ENCODE measurements at regions of chr1 and their contacts with region 1.

Region 1: DNA sequence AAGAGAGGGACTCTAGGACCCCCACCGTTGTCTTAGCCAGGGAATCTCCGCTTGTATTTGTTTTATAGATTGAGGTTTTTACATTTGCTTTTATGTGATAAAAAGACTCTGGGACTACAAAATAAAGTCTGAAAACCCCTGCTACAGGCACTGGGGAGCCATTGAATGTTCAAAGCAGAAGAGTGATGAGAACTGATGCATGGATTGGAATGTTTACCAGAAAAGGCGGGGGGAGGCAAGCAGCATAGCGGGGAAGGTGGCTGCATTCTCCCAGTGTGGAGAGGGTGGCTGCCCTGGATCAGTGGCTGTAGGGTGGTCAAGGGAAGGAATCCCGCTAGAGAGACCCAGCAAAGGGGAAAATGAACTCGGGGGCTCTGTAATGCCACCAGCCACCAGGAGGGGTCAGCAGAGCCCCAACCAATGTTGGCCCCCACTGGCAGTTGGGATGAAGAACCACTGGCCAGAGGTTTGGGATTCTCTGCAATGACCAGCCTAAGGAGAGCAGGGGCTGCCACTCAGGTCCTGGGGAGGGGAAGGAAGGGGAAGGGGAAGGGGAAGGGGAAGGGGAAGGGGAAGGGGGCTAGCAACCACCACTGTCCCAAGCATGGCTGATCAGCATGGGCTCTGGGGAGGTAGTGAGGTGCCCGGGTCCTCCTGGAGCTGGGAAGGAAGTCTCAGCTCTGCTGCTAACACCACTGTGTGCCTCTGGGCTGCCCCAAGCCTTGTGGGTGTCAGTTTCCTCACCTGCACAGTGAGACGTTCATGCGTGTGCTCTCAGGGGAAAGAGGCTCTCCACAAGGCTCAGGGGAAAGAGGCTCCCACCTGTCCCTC is 19.2 kb upstream of the PEF1 start:
- DNase-seq: peak; percentile 78
- H3K4me3 Mint-ChIP-seq: no peak overlapping the region
- H3K27ac Mint-ChIP-seq: no peak overlapping the region
- H3K4me1 Mint-ChIP-seq: peaks cover 13% of the 10 kb centered on the region
- H3K27me3 Mint-ChIP-seq: peaks cover 42% of the 10 kb centered on the region
- CTCF ChIP-seq: peak; percentile 96

Region 2: DNA sequence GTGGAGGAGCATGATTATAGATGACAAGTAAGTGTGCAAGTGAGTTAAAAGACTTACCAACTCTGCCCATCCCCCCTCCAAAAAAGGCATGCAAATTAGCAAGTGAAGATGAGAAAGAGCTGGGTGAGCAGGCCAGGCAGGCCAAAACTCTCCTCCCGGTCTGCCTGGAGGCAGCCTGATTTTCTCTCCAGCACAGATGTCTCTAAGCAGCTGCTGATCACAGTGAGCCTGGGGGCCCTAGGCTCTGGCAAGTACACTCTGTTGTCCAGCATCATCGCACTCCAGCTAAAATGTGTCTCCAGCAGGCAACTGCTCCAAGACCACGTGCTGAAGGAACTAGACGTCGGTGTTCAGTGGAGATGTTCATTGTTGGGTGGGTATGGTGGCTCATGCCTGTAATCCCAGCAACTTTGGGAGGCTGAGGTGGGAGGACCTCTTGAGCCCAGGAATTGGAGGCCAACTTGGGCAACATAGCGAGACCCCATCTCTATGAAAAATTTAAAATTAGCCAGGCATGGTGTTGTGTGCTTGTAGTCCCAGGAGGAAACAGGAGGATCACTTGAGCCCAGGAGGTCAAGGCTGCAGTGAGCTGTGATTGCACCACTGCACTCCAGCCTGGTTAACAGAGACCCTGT is 541.6 kb before region 1 on chr1:
- CTCF ChIA-PET with region 1: no interaction called
- intact Hi-C with region 1: no loop called
- DNase-seq: no peak
- H3K4me3 Mint-ChIP-seq: no peak overlapping the region
- H3K27ac Mint-ChIP-seq: no peak overlapping the region
- H3K4me1 Mint-ChIP-seq: no peaks in the 10 kb centered on the region
- H3K27me3 Mint-ChIP-seq: no peaks in the 10 kb centered on the region
- CTCF ChIP-seq: no peak

Region 3: GRCh38 chr1:31705080-31705866 is 41.4 kb after region 1 on chr1:
- CTCF ChIA-PET with region 1: interaction called, 9 read pairs
- intact Hi-C with region 1: loop called (anchors 2 kb)
- DNase-seq: peak; percentile 35
- H3K4me3 Mint-ChIP-seq: no peak overlapping the region
- H3K27ac Mint-ChIP-seq: no peak overlapping the region
- H3K4me1 Mint-ChIP-seq: peaks cover 37% of the 10 kb centered on the region
- H3K27me3 Mint-ChIP-seq: peaks cover 37% of the 10 kb centered on the region
- CTCF ChIP-seq: no peak

Region 4: GRCh38 chr1:31745096-31745945 is 81.5 kb after region 1 on chr1:
- CTCF ChIA-PET with region 1: interaction called, 13 read pairs
- intact Hi-C with region 1: loop called (anchors 1 kb)
- DNase-seq: peak; percentile 84
- H3K4me3 Mint-ChIP-seq: no peak overlapping the region
- H3K27ac Mint-ChIP-seq: no peak overlapping the region
- H3K4me1 Mint-ChIP-seq: peaks cover 18% of the 10 kb centered on the region
- H3K27me3 Mint-ChIP-seq: peaks cover 65% of the 10 kb centered on the region
- CTCF ChIP-seq: peak; percentile 68